Heart left ventricle (tissue), 16 donors: ENCODE measurements at regions of chr1 and their contacts with region 1.

Region 1: GRCh38 chr1:169694304-169695075 is 16.9 kb downstream of the SELL start:
- DNase-seq: no peak
- ATAC-seq: no peak
- H3K4me3 ChIP-seq: no peak overlapping the region
- H3K27ac ChIP-seq: peak overlapping the region in 1 of 12 donors; percentile 81
- H3K4me1 ChIP-seq: peaks cover 0 to 74% (median 0%) of the 10 kb centered on the region in 12 donors
- H3K27me3 ChIP-seq: peaks cover 0 to 6% (median 0%) of the 10 kb centered on the region in 9 donors
- CTCF ChIP-seq: no peak
- POLR2A ChIP-seq: no peak

Region 2: DNA sequence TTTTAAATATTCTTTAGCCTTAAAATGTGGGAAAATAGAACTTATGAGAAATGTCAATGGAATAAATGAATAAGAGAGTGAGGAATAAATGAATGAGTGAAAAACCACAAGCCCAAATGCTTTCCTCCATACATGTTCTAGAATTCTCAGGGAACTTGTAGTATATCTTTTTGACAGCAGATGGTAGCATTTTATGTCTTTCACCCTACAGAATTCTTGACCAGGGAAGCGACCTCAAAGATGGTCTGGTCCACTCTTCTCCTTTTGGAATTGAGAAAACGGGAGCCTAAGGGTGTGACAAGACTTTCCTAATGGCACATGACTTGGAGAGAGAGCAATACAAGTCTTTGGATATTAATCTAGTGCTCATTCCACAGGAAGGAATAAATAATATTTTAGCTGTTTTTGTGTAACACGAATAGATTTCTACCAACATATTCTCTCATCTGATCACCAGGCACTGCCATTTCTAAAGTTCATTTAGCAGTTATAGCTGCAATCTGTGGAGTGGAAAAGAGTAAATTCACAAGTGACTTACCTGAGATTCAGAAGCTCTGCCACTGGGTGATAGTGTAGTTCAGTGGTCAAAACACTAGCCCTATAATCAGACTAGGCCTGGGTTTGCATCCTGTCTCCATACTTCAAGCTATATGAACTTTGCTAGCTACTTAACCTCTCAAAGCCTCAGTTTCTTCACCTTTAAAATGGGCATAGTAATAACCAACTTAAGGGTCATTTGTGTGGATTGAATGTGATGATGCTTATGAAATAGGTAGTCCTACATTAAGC is 93.2 kb before region 1 on chr1:
- intact Hi-C with region 1: loop called in 1 of 10 experiments (anchors 5 kb)
- DNase-seq: no peak
- ATAC-seq: peak in 1 of 4 donors; percentile 54
- H3K4me3 ChIP-seq: no peak overlapping the region
- H3K27ac ChIP-seq: no peak overlapping the region
- H3K4me1 ChIP-seq: peaks cover 0 to 22% (median 0%) of the 10 kb centered on the region in 12 donors
- H3K27me3 ChIP-seq: peaks cover 0 to 8% (median 0%) of the 10 kb centered on the region in 9 donors
- CTCF ChIP-seq: peak; percentile 29 to 60 (median 47)
- POLR2A ChIP-seq: no peak

Region 3: GRCh38 chr1:169624122-169624521 is 70.4 kb before region 1 on chr1:
- intact Hi-C with region 1: loop called in 1 of 10 experiments (anchors 10 kb)
- DNase-seq: no peak
- ATAC-seq: peak in 3 of 4 donors; percentile 14 to 65 (median 48)
- H3K4me3 ChIP-seq: no peak overlapping the region
- H3K27ac ChIP-seq: no peak overlapping the region
- H3K4me1 ChIP-seq: no peaks in the 10 kb centered on the region
- H3K27me3 ChIP-seq: peaks cover 0 to 5% (median 0%) of the 10 kb centered on the region in 9 donors
- CTCF ChIP-seq: no peak
- POLR2A ChIP-seq: no peak